Activated CD4-positive, alpha-beta T cell treated with anti-CD3 and anti-CD28 coated beads for 36 hours (primary cell): ENCODE measurements at regions of chr17 and their contacts with region 1.

Region 1: DNA sequence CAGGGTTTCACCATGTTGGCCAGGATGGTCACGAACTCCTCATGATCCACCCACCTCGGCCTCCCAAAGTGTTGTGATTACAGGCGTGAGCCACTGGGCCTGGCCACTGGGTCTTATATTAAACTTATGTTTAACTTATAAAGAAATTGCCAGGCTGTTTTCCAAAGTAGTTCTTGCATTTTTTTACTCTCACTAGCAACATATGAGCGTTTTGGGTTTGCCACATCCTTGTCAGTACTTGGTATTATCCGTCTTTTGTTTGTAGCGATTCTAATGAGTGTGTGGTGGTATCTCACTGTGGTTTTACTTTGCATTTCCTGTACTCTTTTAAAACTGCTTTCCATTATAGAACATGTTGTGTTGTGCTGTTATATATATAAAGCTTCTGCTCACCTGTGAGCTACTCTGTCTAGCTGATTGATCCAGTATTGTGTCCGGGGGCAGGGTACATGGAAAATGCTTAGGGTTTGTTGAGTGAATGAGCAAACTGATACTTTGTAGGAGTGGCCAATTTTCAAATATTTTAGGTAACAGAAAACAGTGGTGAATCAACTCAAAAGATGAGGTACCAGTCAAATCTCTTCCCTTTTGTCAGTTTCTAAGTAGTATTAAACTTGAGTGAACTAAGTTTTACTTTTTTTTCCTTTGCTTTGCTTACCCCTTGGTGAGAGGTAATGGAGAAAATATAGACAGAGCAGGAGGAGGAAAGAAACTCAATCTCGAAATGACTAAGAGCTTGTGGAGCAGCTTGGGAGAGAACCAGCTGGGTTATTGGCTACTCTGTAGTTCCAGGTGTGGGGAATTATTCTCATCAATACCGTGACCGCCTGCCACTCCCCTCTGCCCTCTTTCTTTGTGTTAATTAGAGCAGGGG is 75.8 kb downstream of the PITPNC1 start:
- DNase-seq: peak; percentile 64
- ATAC-seq: peak; percentile 85
- H3K4me3 Mint-ChIP-seq: peak overlapping the region; percentile 50
- H3K27ac Mint-ChIP-seq: peak overlapping the region; percentile 93
- H3K4me1 Mint-ChIP-seq: peaks cover 87% of the 10 kb centered on the region
- H3K27me3 Mint-ChIP-seq: no peaks in the 10 kb centered on the region

Region 2: GRCh38 chr17:67421869-67422273 is 31.0 kb before region 1 on chr17:
- CTCF ChIA-PET with region 1: interaction called, 3 read pairs
- POLR2A ChIA-PET with region 1: interaction called, 3 read pairs
- intact Hi-C with region 1: loop called in 1 of 2 experiments (anchors 1 kb)
- DNase-seq: peak; percentile 70
- ATAC-seq: peak; percentile 96
- H3K4me3 Mint-ChIP-seq: peak overlapping the region; percentile 20
- H3K27ac Mint-ChIP-seq: peak overlapping the region; percentile 88
- H3K4me1 Mint-ChIP-seq: peaks cover 75% of the 10 kb centered on the region
- H3K27me3 Mint-ChIP-seq: no peaks in the 10 kb centered on the region

Region 3: DNA sequence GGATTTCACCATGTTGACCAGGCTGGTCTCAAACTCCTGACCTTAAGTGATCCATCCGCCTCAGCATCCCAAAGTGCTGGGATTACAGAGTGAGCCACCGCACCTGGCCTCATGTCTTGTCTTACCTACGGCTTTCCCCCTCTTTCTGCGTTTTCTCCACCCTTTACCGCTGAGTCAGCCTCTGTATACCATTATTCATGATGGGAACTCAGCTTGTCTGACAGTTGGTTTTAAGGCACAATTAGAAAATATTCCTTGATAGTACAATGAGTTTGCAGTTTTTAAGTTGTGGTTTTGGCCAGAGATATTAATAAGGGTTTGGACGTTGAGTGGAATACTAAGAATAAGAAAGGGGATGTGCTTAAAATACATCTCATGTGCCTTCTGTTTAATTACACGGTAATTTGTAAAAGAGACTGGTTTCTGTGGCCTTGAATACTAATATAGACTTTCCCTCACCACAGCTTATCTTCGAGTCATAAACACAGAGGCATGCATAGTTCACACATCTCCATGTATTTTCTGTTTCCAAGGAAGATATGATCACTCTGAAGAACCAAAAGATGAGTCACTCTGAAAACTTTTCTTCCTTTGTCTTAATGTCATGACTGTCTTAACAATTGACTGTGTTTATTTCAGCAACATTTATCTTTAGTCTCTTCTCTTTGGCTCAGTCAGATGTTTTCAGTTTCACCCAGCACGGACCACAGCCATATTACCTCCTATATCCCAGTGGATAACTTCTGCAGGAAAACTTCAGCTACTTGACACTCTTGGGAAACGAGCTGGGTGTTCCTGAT is 21.5 kb before region 1 on chr17:
- CTCF ChIA-PET with region 1: interaction called, 7 read pairs
- POLR2A ChIA-PET with region 1: no interaction called
- intact Hi-C with region 1: loop called (anchors 1 kb)
- DNase-seq: no peak
- ATAC-seq: peak; percentile 76
- H3K4me3 Mint-ChIP-seq: peak overlapping the region; percentile 9
- H3K27ac Mint-ChIP-seq: peak overlapping the region; percentile 89
- H3K4me1 Mint-ChIP-seq: peaks cover 74% of the 10 kb centered on the region
- H3K27me3 Mint-ChIP-seq: no peaks in the 10 kb centered on the region

Region 4: DNA sequence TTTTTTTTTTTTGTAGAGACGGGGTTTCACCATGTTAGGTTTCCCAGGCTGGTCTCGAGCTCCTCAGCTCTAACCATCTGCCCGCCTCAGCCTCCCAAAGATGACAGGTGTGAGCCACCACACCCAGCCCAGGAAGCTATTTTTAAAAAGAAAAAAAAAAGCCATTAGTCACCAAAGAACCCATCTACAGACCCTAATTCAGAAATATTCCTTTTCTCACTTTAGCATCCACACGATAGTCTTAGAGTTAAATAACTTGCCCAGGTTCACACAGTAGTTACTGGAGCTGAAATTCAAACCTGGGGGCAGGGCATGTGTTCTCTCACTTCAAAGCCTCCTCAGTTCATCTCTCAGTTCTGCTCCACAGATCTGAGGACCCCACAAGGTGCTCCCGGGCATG is 194.6 kb after region 1 on chr17:
- CTCF ChIA-PET with region 1: no interaction called
- POLR2A ChIA-PET with region 1: no interaction called
- intact Hi-C with region 1: no loop called
- DNase-seq: no peak
- ATAC-seq: no peak
- H3K4me3 Mint-ChIP-seq: no peak overlapping the region
- H3K27ac Mint-ChIP-seq: no peak overlapping the region
- H3K4me1 Mint-ChIP-seq: peaks cover 2% of the 10 kb centered on the region
- H3K27me3 Mint-ChIP-seq: no peaks in the 10 kb centered on the region